ENCODE measurements at regions of chr3 and their contacts with region 1.

Region 1: DNA sequence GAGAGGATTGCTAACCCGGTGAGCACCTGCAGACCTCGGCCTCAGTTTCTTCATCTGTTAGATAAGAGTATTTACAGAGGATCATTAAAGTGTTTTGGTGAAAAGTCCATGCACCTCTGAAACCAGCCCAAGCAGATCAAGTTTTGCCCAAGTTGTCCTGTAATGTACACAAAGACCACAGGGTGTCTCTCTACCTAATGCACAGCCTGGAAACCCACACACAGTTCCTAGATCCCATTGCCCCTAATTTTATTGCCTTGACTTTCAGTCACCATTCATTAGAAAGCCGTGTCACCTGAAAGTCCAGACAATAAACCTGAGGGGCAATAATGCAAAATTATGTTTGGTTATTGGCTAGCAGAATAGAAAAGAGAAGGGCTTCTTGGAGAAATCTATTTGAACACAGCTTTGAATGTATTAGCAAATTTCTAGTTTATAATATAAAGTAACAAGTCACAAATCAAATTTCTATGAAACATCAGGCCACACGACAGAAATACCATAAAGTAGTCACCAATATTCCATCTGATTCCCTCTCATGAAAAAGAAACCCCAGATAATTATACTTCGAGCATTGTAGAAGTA is 161.3 kb upstream of the SLC2A2 start:
- DNase-seq: peak in 2 of 7 donors; percentile 19 to 21
- H3K4me3 ChIP-seq: no peak overlapping the region
- H3K27ac ChIP-seq: no peak overlapping the region
- H3K4me1 ChIP-seq: peaks cover 1 to 8% of the 10 kb centered on the region in 2 donors
- H3K27me3 ChIP-seq: no peaks in the 10 kb centered on the region
- CTCF ChIP-seq: peak; percentile 29 to 66 (median 64)
- POLR2A ChIP-seq: no peak

Region 2: GRCh38 chr3:171038342-171039138 is 149.3 kb before region 1 on chr3:
- intact Hi-C with region 1: no loop called
- DNase-seq: no peak
- H3K4me3 ChIP-seq: no peak overlapping the region
- H3K27ac ChIP-seq: no peak overlapping the region
- H3K4me1 ChIP-seq: no peaks in the 10 kb centered on the region
- H3K27me3 ChIP-seq: peaks cover 4% of the 10 kb centered on the region
- CTCF ChIP-seq: no peak
- POLR2A ChIP-seq: no peak

Region 3: DNA sequence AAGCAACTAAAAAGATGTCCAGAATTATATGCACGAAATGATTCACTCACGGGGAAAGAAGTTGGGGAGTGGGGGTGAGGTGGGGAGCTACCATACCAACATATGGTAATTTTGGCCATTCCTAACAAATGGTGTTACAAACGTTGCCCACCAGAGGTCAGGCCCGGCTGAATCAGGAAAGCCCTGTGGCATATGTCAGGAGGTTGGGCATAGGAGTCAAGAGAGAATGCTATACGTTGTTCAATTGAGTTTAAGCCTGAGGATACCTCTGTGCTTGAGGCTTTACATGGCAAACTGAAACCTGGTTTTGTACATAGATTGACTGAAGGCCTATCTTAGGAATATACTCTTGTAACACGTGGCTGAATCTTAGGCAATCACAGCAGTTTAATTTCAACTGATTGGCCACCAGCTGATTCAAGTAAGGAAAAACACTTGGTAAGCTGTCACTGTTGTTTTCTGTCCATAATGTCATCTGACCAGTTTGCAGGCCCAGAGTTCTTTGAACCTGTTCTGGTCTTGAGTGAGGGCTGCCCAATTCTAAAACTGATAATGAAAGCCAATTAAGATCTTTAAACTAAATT is 137.8 kb before region 1 on chr3:
- intact Hi-C with region 1: loop called in 1 of 2 experiments (anchors 10 kb)
- DNase-seq: peak; percentile 40 to 74 (median 62)
- H3K4me3 ChIP-seq: no peak overlapping the region
- H3K27ac ChIP-seq: no peak overlapping the region
- H3K4me1 ChIP-seq: peaks cover 0 to 5% of the 10 kb centered on the region in 2 donors
- H3K27me3 ChIP-seq: no peaks in the 10 kb centered on the region
- CTCF ChIP-seq: peak; percentile 52 to 77 (median 69)
- POLR2A ChIP-seq: no peak

Measured in adrenal gland (tissue), 19 donors.